Activated naive CD8-positive, alpha-beta T cell treated with anti-CD3 and anti-CD28 coated beads, Interleukin-2, amount 10 ng/mL, durations not matched to agents 7 days and 5 days (primary cell): ENCODE measurements at regions of chr22 and their contacts with region 1.

Region 1: DNA sequence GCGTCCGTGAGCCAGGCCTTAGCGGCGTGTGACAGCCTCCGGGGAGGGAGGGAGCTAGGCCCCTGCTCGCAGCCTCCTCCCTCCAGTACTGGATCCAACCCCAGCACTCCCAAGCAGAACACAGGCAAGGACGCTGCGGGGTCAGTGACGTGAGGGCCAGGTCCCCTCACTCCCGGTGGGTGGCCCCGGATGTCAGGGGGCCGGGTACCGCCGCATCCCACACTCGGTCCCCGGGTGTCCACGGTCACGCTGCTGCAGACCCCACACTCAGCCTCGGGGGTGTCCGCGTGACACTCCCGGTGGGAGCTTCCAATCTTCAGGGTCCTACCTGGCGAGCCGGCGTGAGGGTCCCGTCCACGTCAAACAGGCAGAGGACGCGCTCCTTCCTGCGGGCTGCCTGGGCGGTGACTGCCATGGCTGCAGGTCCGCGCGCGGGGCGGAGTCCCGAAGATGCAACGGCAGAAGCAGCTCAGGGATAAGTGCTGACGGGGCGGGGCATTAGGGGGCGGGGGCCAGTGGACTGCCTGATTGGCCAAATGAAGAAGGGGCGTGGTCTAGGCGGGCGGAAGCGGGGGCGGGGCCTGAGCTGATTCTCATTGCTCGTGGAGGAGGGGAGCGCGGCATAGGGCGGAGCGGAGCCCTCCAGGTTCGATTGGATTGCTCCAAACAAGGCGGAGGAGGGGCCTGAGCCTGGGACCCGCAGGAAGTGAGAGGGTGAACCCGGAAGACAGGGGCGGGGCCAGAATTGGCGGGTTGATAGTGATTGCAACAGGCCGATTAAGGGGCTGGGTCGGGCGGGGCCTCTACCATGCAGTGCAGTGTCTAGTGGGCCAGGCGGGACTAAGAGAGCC is at the start of gene PMM1:
- DNase-seq: peak; percentile 98
- ATAC-seq: peak; percentile 95
- H3K4me3 Mint-ChIP-seq: peak within 1 kb of the TSS; percentile 92
- H3K27ac Mint-ChIP-seq: peak within 1 kb of the TSS; percentile 92
- H3K4me1 Mint-ChIP-seq: peaks cover 9% of the 10 kb centered on the region
- H3K27me3 Mint-ChIP-seq: no peaks in the 10 kb centered on the region
- total RNA-seq, gene PMM1: 39.0 to 42.9 TPM

Region 2: DNA sequence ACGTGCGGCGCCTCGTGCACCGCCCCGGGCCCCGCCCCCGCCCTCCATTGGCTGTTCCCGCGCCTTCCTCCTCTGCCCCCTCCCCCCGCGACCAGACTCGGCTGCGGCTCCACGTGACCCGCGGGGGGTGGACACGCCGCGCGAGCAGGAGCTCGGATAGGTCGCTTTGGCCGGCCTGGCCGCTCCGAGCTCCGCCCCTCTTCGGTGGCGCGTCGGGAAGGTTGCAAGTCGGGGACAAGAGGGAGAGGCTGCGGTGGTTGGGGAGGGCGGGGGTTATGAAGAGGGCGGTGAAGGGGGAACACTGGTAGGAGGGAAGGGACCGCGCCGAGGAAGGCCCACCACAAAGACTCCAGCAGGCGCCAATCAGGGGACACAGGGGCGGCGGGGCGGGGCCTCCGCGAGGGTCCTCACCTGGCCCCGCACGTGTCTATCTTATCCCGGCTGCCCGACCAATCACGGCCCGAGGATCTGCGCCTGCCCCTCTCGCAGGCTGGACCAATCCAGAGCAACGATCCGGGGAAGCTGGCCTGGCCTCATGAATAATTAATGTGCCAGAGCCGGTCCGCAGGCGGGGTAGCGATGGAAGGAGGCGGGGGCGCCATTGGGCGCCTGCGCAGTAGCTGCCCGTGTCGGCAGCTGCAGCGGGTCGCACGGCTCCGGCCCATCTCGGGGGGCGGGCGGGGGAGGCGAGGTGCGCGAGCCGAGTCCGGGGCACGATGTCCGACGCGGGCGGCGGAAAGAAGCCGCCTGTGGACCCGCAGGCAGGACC is 208.1 kb before region 1 on chr22 and contains the start of gene TEF:
- POLR2A ChIA-PET with region 1: interaction called, 13 read pairs
- DNase-seq: peak; percentile 98
- ATAC-seq: peak; percentile 94
- H3K4me3 Mint-ChIP-seq: peak within 1 kb of the TSS; percentile 89
- H3K27ac Mint-ChIP-seq: peak within 1 kb of the TSS; percentile 96
- H3K4me1 Mint-ChIP-seq: peaks cover 5% of the 10 kb centered on the region
- H3K27me3 Mint-ChIP-seq: peaks cover 4% of the 10 kb centered on the region
- total RNA-seq, gene TEF: 3.6 to 4.0 TPM

Region 3: GRCh38 chr22:41468381-41469217 is 121.0 kb before region 1 on chr22 and contains the starts of genes ACO2 and PHF5A:
- POLR2A ChIA-PET with region 1: interaction called, 18 read pairs
- DNase-seq: peak; percentile 97
- ATAC-seq: peak; percentile 91
- H3K4me3 Mint-ChIP-seq: peak within 1 kb of the TSS; percentile 94
- H3K27ac Mint-ChIP-seq: peak within 1 kb of the TSS; percentile 100
- H3K4me1 Mint-ChIP-seq: peaks cover 39% of the 10 kb centered on the region
- H3K27me3 Mint-ChIP-seq: no peaks in the 10 kb centered on the region
- total RNA-seq, gene ACO2: 73.7 to 76.2 TPM
- total RNA-seq, gene PHF5A: 47.0 to 51.0 TPM

Region 4: DNA sequence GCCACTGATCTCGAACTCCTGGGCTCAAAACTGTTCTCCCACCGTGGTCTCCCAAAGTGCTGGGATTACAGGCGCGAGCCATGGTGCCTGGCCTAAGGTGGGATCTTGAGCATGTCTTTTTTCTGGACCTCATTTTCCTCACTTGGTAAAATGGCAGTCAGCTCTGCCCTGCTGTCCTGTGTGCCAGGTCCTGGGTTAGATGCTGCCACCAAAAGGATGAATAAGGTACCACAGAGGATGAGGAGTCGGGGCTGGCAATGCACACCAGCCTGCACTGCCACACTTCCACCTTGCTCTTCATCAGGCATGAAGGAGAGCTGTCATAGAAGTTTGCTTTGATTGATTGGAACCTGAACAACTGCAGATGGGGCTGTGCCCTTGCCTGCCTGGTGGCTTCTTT is 88.4 kb before region 1 on chr22:
- POLR2A ChIA-PET with region 1: no interaction called
- DNase-seq: no peak
- ATAC-seq: peak; percentile 70
- H3K4me3 Mint-ChIP-seq: no peak overlapping the region
- H3K27ac Mint-ChIP-seq: no peak overlapping the region
- H3K4me1 Mint-ChIP-seq: no peaks in the 10 kb centered on the region
- H3K27me3 Mint-ChIP-seq: no peaks in the 10 kb centered on the region

Region 5: DNA sequence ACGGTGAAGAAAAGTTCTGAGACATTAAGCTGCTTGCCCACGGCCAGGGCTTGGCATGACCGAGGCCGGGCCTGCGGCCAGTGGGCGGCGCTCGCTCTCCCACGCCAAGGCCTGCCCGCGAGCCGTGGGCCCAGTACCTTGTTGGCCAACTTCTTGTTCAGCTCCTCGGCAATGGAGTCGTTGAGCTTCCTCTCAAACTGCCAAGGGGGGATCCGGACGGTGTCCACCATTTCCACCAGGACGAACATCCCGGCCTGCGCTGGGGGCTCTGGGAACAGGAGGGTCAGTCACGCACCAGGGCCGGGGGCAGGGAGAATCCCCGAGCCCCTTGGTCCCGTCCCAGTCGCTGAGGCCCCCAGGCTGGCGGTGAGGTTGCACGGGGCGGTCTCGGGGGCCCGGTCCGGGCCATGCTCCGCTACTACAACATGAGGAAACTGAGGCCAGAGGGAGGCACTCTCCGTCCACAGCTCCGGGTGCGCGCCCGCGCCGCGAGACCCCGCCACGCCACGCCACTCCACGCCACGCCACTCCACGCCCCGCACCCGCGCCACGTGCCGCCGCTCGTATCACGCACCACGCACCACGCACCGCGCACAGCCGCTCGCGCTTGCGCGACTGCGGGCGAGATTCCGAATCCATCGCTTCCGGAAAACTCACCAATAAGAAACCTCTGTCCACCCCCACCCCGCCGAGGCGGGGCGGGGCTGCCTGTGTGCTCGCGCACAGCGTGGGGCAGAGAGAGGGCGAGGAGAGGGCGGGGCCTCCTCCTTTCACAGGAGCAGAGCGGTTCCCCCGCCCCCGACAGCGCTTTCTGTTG is 45.6 kb before region 1 on chr22 and contains the start of gene POLR3H:
- POLR2A ChIA-PET with region 1: interaction called, 15 read pairs
- DNase-seq: peak; percentile 96
- ATAC-seq: peak; percentile 97
- H3K4me3 Mint-ChIP-seq: peak within 1 kb of the TSS; percentile 98
- H3K27ac Mint-ChIP-seq: peak within 1 kb of the TSS; percentile 95
- H3K4me1 Mint-ChIP-seq: peaks cover 24% of the 10 kb centered on the region
- H3K27me3 Mint-ChIP-seq: peaks cover 1% of the 10 kb centered on the region
- total RNA-seq, gene POLR3H: 29.8 to 30.5 TPM

Region 6: GRCh38 chr22:41603873-41604332 is 14.3 kb after region 1 on chr22:
- POLR2A ChIA-PET with region 1: interaction called, 23 read pairs
- DNase-seq: peak; percentile 56
- ATAC-seq: peak; percentile 93
- H3K4me3 Mint-ChIP-seq: peak overlapping the region; percentile 29
- H3K27ac Mint-ChIP-seq: peak overlapping the region; percentile 61
- H3K4me1 Mint-ChIP-seq: peaks cover 29% of the 10 kb centered on the region
- H3K27me3 Mint-ChIP-seq: peaks cover 13% of the 10 kb centered on the region

Region 7: DNA sequence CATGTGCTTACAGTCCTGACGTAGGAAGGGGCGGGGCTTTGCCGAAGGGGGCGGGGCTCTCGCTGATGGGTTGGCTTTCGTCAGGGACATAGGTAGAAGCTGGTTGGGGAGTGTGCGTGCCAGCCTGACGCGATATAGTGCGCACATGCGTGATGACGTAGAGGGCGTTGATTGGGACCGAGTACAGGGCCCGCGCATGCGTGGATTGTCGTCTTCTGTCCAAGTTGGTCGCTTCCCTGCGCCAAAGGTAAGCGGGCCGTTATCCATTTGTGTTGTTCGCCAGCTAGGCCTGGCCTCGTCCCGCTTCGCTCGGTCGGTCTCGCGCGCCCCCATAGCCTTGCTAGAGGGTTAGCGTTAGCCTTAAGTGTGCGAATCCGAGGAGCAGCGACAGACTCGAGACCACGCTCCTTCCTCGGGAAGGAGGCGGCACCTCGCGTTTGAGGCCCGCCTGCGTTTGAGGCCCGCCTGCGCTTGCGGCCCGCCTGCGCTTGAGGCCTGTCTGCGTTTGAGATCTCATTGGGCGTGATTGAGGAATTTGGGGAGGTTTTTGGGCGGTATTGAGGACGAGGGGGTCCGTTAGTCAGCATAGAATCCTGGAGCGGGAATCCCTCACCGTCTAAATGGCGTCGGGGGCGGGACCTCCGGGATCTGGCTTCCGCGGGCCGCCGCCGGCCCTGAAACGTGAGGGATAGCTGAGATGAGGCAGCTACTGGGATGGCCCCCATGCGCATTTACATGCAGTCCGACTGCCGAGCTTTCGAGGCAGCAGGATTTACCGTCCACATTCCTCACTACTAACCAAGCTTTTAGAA is 31.7 kb after region 1 on chr22 and contains the start of gene XRCC6:
- POLR2A ChIA-PET with region 1: interaction called, 91 read pairs
- DNase-seq: peak; percentile 99
- ATAC-seq: peak; percentile 92
- H3K4me3 Mint-ChIP-seq: peak within 1 kb of the TSS; percentile 97
- H3K27ac Mint-ChIP-seq: peak within 1 kb of the TSS; percentile 98
- H3K4me1 Mint-ChIP-seq: peaks cover 33% of the 10 kb centered on the region
- H3K27me3 Mint-ChIP-seq: no peaks in the 10 kb centered on the region
- total RNA-seq, gene XRCC6: 215 to 222 TPM

Region 8: GRCh38 chr22:41642331-41643110 is 52.9 kb after region 1 on chr22:
- POLR2A ChIA-PET with region 1: no interaction called
- DNase-seq: no peak
- ATAC-seq: no peak
- H3K4me3 Mint-ChIP-seq: no peak overlapping the region
- H3K27ac Mint-ChIP-seq: no peak overlapping the region
- H3K4me1 Mint-ChIP-seq: peaks cover 3% of the 10 kb centered on the region
- H3K27me3 Mint-ChIP-seq: no peaks in the 10 kb centered on the region

Region 9: GRCh38 chr22:41742916-41743315 is 153.3 kb after region 1 on chr22:
- POLR2A ChIA-PET with region 1: no interaction called
- DNase-seq: no peak
- ATAC-seq: no peak
- H3K4me3 Mint-ChIP-seq: no peak overlapping the region
- H3K27ac Mint-ChIP-seq: no peak overlapping the region
- H3K4me1 Mint-ChIP-seq: peaks cover 11% of the 10 kb centered on the region
- H3K27me3 Mint-ChIP-seq: peaks cover 25% of the 10 kb centered on the region